Activated CD8-positive, alpha-beta T cell treated with anti-CD3 and anti-CD28 coated beads, Interleukin-2, amount 10 ng/mL, durations not matched to agents 7 days and 5 days (primary cell): ENCODE measurements at regions of chr1 and their contacts with region 1.

Region 1: GRCh38 chr1:84772428-84772943 is 82.2 kb upstream of the SSX2IP start:
- DNase-seq: peak; percentile 80
- ATAC-seq: peak; percentile 76
- H3K4me3 Mint-ChIP-seq: no peak overlapping the region
- H3K27ac Mint-ChIP-seq: peak overlapping the region; percentile 23
- H3K4me1 Mint-ChIP-seq: no peaks in the 10 kb centered on the region
- H3K27me3 Mint-ChIP-seq: peaks cover 23% of the 10 kb centered on the region

Region 2: GRCh38 chr1:84753516-84754385 is 18.7 kb before region 1 on chr1:
- CTCF ChIA-PET with region 1: interaction called, 32 read pairs
- POLR2A ChIA-PET with region 1: no interaction called
- DNase-seq: peak; percentile 80
- ATAC-seq: peak; percentile 92
- H3K4me3 Mint-ChIP-seq: no peak overlapping the region
- H3K27ac Mint-ChIP-seq: no peak overlapping the region
- H3K4me1 Mint-ChIP-seq: peaks cover 5% of the 10 kb centered on the region
- H3K27me3 Mint-ChIP-seq: peaks cover 24% of the 10 kb centered on the region

Region 3: DNA sequence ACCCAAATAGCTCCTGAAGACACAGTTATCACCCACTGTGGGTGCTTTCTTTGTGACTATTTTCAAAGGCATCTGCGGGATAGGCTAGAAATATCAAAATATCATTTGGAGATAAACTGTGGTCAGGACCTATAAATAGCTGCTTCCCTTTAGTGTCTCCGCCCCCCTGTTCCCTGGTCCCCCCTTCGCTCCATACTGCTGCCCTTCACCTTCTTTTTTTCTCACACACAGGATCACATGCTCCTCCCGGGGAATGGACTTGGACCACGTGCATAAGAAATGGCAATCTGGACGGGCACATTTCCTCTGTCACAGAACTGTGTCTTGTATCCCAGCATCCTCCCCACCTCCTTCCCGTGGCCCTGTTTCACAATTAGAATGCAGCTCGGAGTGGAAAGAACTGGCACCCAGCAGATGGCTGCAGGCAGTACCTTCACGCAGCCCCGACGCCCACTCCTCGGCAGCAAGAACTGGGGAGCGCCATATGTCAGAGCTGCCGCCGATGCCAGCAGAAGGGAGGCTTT is 13.5 kb before region 1 on chr1:
- CTCF ChIA-PET with region 1: interaction called, 32 read pairs
- POLR2A ChIA-PET with region 1: no interaction called
- DNase-seq: no peak
- ATAC-seq: no peak
- H3K4me3 Mint-ChIP-seq: no peak overlapping the region
- H3K27ac Mint-ChIP-seq: no peak overlapping the region
- H3K4me1 Mint-ChIP-seq: peaks cover 4% of the 10 kb centered on the region
- H3K27me3 Mint-ChIP-seq: peaks cover 10% of the 10 kb centered on the region

Region 4: DNA sequence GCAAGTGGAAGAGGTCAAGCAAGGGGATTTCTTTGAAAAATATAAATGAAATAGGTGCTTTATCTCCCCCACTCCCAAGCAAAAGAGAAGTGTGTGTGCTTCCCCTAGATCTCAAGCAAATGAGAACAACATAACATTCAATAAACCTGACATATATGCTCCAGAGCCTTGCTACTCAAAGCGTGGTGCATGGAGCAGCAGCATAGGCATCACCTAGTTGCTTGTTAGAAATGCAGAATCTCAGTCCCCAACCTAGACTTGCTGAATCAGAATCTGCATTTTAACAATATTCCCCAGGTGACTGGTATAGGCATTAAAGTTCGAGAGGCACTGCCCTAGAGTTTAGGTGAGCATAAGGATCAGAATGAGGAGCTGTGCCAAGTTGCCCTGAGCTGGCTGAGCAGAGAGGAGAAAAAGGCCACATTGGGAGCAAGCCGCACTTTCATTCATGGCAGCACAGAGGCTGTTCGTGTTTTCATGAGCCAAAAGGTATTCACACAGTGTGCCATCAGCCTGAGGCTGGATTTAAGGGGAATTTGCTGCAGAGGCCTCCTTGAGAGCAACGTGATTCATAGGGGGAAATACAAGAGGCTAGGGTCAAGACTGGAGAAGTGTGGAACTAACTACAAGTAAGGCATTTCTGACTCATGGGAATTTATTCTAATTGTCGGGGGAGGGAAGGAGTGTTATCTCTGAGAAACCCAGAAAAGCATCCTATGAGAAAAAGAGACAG is 134.8 kb after region 1 on chr1:
- CTCF ChIA-PET with region 1: no interaction called
- POLR2A ChIA-PET with region 1: no interaction called
- DNase-seq: no peak
- ATAC-seq: no peak
- H3K4me3 Mint-ChIP-seq: no peak overlapping the region
- H3K27ac Mint-ChIP-seq: no peak overlapping the region
- H3K4me1 Mint-ChIP-seq: no peaks in the 10 kb centered on the region
- H3K27me3 Mint-ChIP-seq: peaks cover 30% of the 10 kb centered on the region

Region 5: DNA sequence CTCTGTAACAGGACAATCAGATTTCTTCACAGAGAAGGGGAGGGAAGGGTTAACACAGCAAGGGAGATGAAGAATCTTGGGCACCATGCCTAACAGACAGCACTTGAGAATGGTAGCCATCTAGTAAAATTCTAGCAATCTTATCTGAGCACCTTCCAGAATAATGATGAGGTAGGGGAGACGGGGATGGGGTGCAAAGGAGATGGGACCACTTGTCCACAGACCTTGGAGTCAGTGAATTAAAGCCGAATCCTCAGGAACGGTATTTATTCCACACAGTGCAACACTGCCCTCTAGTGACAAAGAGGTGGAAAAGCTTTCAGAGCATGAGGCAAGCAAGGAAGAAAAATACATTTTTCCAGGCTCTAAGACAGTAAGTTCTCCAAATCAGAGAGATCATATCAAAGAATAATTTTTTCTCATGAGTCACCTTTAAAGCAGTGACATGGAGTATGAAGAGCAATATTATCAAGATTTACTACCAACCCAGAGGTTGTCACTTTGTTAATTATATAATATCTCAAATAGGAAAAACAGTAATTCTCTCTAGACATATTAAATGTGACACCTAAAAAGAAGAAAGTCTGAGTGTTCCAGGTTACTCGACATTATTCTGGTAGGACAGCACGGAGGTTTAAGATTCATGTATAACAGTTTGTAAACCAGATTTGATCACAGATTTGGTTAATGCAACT is 163.8 kb after region 1 on chr1:
- CTCF ChIA-PET with region 1: interaction called, 19 read pairs
- POLR2A ChIA-PET with region 1: interaction called, 3 read pairs
- DNase-seq: peak; percentile 49
- ATAC-seq: peak; percentile 55
- H3K4me3 Mint-ChIP-seq: no peak overlapping the region
- H3K27ac Mint-ChIP-seq: no peak overlapping the region
- H3K4me1 Mint-ChIP-seq: no peaks in the 10 kb centered on the region
- H3K27me3 Mint-ChIP-seq: no peaks in the 10 kb centered on the region